Activated B cell treated with CpG ODN at 0.5 μM for 24 hours (primary cell): ENCODE measurements at regions of chr6 and their contacts with region 1.

Region 1: DNA sequence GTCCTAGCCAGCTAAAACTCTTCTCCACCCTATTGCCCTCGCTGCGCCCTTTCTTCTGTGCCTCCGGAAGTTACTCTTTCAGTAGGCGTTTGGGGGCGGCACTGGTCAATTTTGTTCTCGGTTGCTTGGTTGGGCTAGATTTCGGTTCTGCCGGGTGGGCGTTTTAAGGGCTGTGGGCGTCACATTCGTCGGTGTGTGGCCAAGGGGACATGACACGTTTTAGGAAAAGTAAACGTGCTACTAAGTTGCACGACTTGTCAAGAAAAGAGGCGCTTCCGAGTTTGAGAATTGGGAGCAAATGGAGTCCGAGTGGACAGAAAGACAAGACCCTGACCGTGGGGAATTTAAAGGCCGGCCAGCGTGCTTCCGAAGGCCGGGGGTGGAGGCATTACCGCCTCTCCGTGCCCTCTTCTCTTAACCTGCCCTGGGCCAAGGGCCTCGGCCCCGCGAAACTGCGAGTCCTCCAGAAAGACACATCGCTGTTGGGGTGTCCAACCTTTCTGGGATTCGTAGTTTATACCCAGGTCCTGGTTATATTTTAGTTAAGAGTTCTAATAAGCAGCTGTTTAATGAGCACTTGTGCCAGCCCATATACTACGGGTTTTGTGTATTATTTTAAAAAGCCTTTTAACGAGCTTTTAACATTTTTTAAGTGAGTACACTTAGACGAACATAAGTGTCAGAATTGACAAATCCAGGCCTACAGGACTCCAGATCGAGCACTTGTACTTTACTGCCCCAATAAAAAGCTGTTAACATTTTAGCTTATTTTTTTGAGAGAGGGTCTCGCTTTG is 661 bp upstream of the BAG6 start:
- DNase-seq: no peak
- ATAC-seq: peak; percentile 73
- H3K4me3 Mint-ChIP-seq: peak overlapping the region; percentile 94
- H3K27ac Mint-ChIP-seq: peak overlapping the region; percentile 100
- H3K4me1 Mint-ChIP-seq: peaks cover 55% of the 10 kb centered on the region
- H3K27me3 Mint-ChIP-seq: no peaks in the 10 kb centered on the region
- CTCF ChIP-seq: no peak

Region 2: DNA sequence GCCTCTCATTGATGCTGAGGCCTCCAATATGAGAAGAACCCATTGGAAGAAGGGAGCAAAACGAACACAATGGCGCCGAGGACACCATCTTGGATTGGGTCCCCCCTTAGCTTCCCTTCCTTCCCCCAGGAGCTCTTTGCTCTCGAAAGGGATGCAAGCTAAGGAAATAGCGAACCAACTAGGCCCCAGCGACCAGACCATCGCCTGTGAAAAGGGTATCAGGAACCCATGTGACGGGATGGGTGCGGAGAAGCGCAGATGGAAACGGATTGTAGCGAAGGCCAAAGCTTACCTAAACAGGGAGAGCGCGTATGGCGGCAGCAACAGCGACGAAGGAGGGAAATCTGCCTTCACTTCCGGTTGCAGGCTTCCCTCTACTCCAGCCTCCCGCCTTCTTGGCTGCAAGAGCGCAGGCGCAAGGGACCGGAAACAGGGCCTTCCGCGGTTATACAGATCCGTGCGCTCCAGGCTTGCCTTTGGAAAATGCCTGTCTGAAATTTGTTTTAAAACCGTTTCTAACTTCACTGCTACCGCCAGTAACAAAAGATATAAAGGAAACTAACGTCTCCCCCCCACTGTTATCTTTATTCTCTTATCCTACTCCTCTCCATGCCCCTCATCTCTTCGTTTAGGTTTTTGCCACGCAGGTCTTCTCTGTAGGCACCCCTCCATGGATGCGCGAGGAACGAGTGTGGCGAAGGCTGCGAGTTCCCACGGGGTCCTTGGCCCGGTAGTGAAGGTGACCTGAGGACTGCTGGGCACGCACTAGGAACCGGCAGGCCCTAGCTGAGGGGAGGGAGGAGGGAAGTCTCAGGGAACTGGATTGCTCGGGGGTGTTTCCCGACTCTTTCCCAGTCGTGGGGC is 111.2 kb before region 1 on chr6 and contains the start of gene DDX39B:
- CTCF ChIA-PET with region 1: no interaction called
- POLR2A ChIA-PET with region 1: interaction called, 28 read pairs
- intact Hi-C with region 1: loop called (anchors 1 kb)
- DNase-seq: peak; percentile 80
- ATAC-seq: peak; percentile 77
- H3K4me3 Mint-ChIP-seq: peak within 1 kb of the TSS; percentile 98
- H3K27ac Mint-ChIP-seq: peak within 1 kb of the TSS; percentile 97
- H3K4me1 Mint-ChIP-seq: peaks cover 58% of the 10 kb centered on the region
- H3K27me3 Mint-ChIP-seq: no peaks in the 10 kb centered on the region
- CTCF ChIP-seq: no peak
- total RNA-seq, gene DDX39B: 431 and 484 TPM in 2 replicates

Region 3: GRCh38 chr6:31580807-31581433 is 72.2 kb before region 1 on chr6:
- CTCF ChIA-PET with region 1: no interaction called
- POLR2A ChIA-PET with region 1: interaction called, 20 read pairs
- intact Hi-C with region 1: no loop called
- DNase-seq: peak; percentile 94
- ATAC-seq: peak; percentile 71
- H3K4me3 Mint-ChIP-seq: peak overlapping the region; percentile 99
- H3K27ac Mint-ChIP-seq: peak overlapping the region; percentile 94
- H3K4me1 Mint-ChIP-seq: peaks cover 83% of the 10 kb centered on the region
- H3K27me3 Mint-ChIP-seq: no peaks in the 10 kb centered on the region
- CTCF ChIP-seq: peak; percentile 91

Region 4: GRCh38 chr6:31665501-31666336 is 12.6 kb after region 1 on chr6 and contains the start of gene CSNK2B:
- CTCF ChIA-PET with region 1: interaction called, 7 read pairs
- POLR2A ChIA-PET with region 1: interaction called, 188 read pairs
- intact Hi-C with region 1: loop called (anchors 1 kb)
- DNase-seq: peak; percentile 91
- ATAC-seq: peak; percentile 86
- H3K4me3 Mint-ChIP-seq: peak within 1 kb of the TSS; percentile 96
- H3K27ac Mint-ChIP-seq: peak within 1 kb of the TSS; percentile 95
- H3K4me1 Mint-ChIP-seq: peaks cover 61% of the 10 kb centered on the region
- H3K27me3 Mint-ChIP-seq: no peaks in the 10 kb centered on the region
- CTCF ChIP-seq: no peak
- total RNA-seq, gene CSNK2B: 190 and 191 TPM in 2 replicates

Region 5: DNA sequence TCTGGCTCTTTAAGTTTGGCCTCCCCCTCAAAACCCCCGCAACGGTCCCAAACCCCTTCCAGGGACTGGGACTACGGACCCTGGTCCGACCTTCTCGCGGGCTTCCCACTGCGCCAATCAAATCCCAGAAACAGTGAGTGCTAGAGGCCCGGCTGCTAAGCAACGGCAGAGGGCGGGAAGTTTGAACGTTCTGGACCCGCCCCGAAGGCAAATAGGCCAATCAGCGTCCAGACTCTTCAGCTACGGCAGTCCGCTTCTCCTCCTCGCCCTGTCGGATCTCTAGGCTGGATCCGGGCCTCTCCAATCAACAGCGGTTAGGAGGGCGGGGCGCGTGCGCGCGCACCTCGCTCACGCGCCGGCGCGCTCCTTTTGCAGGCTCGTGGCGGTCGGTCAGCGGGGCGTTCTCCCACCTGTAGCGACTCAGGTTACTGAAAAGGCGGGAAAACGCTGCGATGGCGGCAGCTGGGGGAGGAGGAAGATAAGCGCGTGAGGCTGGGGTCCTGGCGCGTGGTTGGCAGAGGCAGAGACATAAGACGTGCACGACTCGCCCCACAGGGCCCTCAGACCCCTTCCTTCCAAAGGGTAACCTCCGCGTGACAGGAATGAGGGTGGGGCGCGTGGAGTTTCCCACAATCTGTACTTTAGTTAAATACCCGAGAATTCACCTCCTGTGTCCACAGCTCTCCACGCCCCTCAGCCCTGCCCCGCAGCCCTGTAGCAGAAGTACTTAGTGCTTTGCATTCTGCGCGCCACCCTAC is 86.7 kb after region 1 on chr6 and contains the start of gene MSH5:
- CTCF ChIA-PET with region 1: no interaction called
- POLR2A ChIA-PET with region 1: interaction called, 13 read pairs
- intact Hi-C with region 1: loop called (anchors 1 kb)
- DNase-seq: peak; percentile 90
- ATAC-seq: peak; percentile 80
- H3K4me3 Mint-ChIP-seq: peak within 1 kb of the TSS; percentile 93
- H3K27ac Mint-ChIP-seq: peak within 1 kb of the TSS; percentile 94
- H3K4me1 Mint-ChIP-seq: peaks cover 51% of the 10 kb centered on the region
- H3K27me3 Mint-ChIP-seq: no peaks in the 10 kb centered on the region
- CTCF ChIP-seq: no peak
- total RNA-seq, gene MSH5: 35.4 and 47.3 TPM in 2 replicates

Region 6: GRCh38 chr6:31827286-31828079 is 174.4 kb after region 1 on chr6 and contains the start of gene HSPA1B:
- CTCF ChIA-PET with region 1: no interaction called
- POLR2A ChIA-PET with region 1: interaction called, 10 read pairs
- intact Hi-C with region 1: loop called (anchors 2 kb)
- DNase-seq: peak; percentile 70
- ATAC-seq: peak; percentile 76
- H3K4me3 Mint-ChIP-seq: peak within 1 kb of the TSS; percentile 91
- H3K27ac Mint-ChIP-seq: peak within 1 kb of the TSS; percentile 99
- H3K4me1 Mint-ChIP-seq: peaks cover 40% of the 10 kb centered on the region
- H3K27me3 Mint-ChIP-seq: no peaks in the 10 kb centered on the region
- CTCF ChIP-seq: no peak
- total RNA-seq, gene HSPA1B: 23.7 and 30.4 TPM in 2 replicates